Activated naive CD4-positive, alpha-beta T cell treated with anti-CD3 and anti-CD28 coated beads for 36 hours (primary cell): ENCODE measurements at regions of chr1 and their contacts with region 1.

Region 1: GRCh38 chr1:160618763-160619274 is 28.0 kb downstream of the SLAMF1 start:
- DNase-seq: peak; percentile 70
- H3K4me3 Mint-ChIP-seq: no peak overlapping the region
- H3K27ac Mint-ChIP-seq: peak overlapping the region; percentile 61
- H3K4me1 Mint-ChIP-seq: peaks cover 57% of the 10 kb centered on the region
- H3K27me3 Mint-ChIP-seq: no peaks in the 10 kb centered on the region

Region 2: GRCh38 chr1:160451119-160451858 is 167.5 kb before region 1 on chr1:
- CTCF ChIA-PET with region 1: interaction called, 3 read pairs
- intact Hi-C with region 1: loop called (anchors 1 kb)
- DNase-seq: no peak
- H3K4me3 Mint-ChIP-seq: peak overlapping the region; percentile 56
- H3K27ac Mint-ChIP-seq: peak overlapping the region; percentile 93
- H3K4me1 Mint-ChIP-seq: peaks cover 76% of the 10 kb centered on the region
- H3K27me3 Mint-ChIP-seq: no peaks in the 10 kb centered on the region

Region 3: GRCh38 chr1:160637821-160638539 is 19.2 kb after region 1 on chr1:
- CTCF ChIA-PET with region 1: interaction called, 16 read pairs
- intact Hi-C with region 1: no loop called
- DNase-seq: peak; percentile 75
- H3K4me3 Mint-ChIP-seq: peak overlapping the region; percentile 66
- H3K27ac Mint-ChIP-seq: peak overlapping the region; percentile 95
- H3K4me1 Mint-ChIP-seq: peaks cover 92% of the 10 kb centered on the region
- H3K27me3 Mint-ChIP-seq: no peaks in the 10 kb centered on the region